Activated CD8-positive, alpha-beta T cell treated with anti-CD3 and anti-CD28 coated beads for 36 hours (primary cell): ENCODE measurements at regions of chr1 and their contacts with region 1.

Region 1: GRCh38 chr1:10186331-10187025 is 23.9 kb upstream of the KIF1B start:
- DNase-seq: peak; percentile 24
- ATAC-seq: peak; percentile 58
- H3K4me3 Mint-ChIP-seq: no peak overlapping the region
- H3K27ac Mint-ChIP-seq: no peak overlapping the region
- H3K4me1 Mint-ChIP-seq: no peaks in the 10 kb centered on the region
- H3K27me3 Mint-ChIP-seq: no peaks in the 10 kb centered on the region
- CTCF ChIP-seq: no peak

Region 2: GRCh38 chr1:10170239-10170574 is 16.3 kb before region 1 on chr1:
- CTCF ChIA-PET with region 1: no interaction called
- POLR2A ChIA-PET with region 1: interaction called, 3 read pairs
- intact Hi-C with region 1: loop called (anchors 2 kb)
- DNase-seq: peak; percentile 55
- ATAC-seq: peak; percentile 86
- H3K4me3 Mint-ChIP-seq: peak overlapping the region; percentile 23
- H3K27ac Mint-ChIP-seq: peak overlapping the region; percentile 98
- H3K4me1 Mint-ChIP-seq: peaks cover 48% of the 10 kb centered on the region
- H3K27me3 Mint-ChIP-seq: no peaks in the 10 kb centered on the region
- CTCF ChIP-seq: no peak

Region 3: GRCh38 chr1:10242811-10243210 is 56.3 kb after region 1 on chr1:
- CTCF ChIA-PET with region 1: no interaction called
- POLR2A ChIA-PET with region 1: no interaction called
- intact Hi-C with region 1: no loop called
- DNase-seq: no peak
- ATAC-seq: no peak
- H3K4me3 Mint-ChIP-seq: no peak overlapping the region
- H3K27ac Mint-ChIP-seq: no peak overlapping the region
- H3K4me1 Mint-ChIP-seq: peaks cover 5% of the 10 kb centered on the region
- H3K27me3 Mint-ChIP-seq: no peaks in the 10 kb centered on the region
- CTCF ChIP-seq: no peak

Region 4: GRCh38 chr1:10438677-10439163 is 252.2 kb after region 1 on chr1:
- CTCF ChIA-PET with region 1: no interaction called
- POLR2A ChIA-PET with region 1: no interaction called
- intact Hi-C with region 1: no loop called
- DNase-seq: no peak
- ATAC-seq: no peak
- H3K4me3 Mint-ChIP-seq: no peak overlapping the region
- H3K27ac Mint-ChIP-seq: no peak overlapping the region
- H3K4me1 Mint-ChIP-seq: no peaks in the 10 kb centered on the region
- H3K27me3 Mint-ChIP-seq: no peaks in the 10 kb centered on the region
- CTCF ChIP-seq: no peak